GM13977 (cell line): ENCODE measurements at regions of chrX and their contacts with region 1.

Region 1: GRCh38 chrX:41781502-41781901 is 57.5 kb downstream of the GPR82 start:
- DNase-seq: peak; percentile 50
- CTCF ChIP-seq: peak; percentile 74

Region 2: GRCh38 chrX:42976729-42977366 is 1195.3 kb after region 1 on chrX:
- in situ Hi-C with region 1: loop called (anchors 25 kb)
- DNase-seq: no peak
- CTCF ChIP-seq: peak; percentile 30

Region 3: GRCh38 chrX:43349363-43349762 is 1567.9 kb after region 1 on chrX:
- in situ Hi-C with region 1: loop called (anchors 25 kb)
- DNase-seq: peak; percentile 22
- CTCF ChIP-seq: peak; percentile 77

Region 4: GRCh38 chrX:43557792-43558191 is 1776.3 kb after region 1 on chrX:
- in situ Hi-C with region 1: loop called (anchors 25 kb)
- DNase-seq: peak; percentile 42
- CTCF ChIP-seq: peak; percentile 77

Region 5: DNA sequence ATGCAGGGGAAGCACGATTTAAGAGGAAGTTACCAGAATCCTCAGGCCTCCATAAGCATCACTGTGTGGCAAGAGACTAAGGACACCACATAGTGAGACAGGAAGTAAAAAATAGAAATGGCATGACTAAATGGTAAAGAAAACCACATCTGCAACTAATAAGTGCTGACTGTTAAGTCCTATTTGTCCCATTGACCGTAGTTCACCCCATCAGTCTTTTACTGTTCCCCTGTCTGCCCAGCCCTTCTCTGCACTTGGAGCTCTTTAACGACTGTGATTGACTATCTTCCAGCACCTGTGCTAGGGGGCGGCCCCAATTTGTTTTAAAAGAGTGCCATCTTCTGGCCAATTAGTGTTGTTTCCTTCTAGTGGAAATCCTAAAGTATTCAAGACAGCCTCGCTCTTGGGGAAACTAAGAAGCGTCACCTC is 1968.8 kb after region 1 on chrX:
- in situ Hi-C with region 1: loop called (anchors 25 kb)
- DNase-seq: peak; percentile 39
- CTCF ChIP-seq: peak; percentile 48